Motor neuron (in vitro differentiated cells): ENCODE measurements at regions of chr19 and their contacts with region 1.

Region 1: GRCh38 chr19:19643158-19644053 is at the start of gene GMIP:
- ATAC-seq: peak; percentile 78 to 87 (median 86)
- H3K4me3 ChIP-seq: peak within 1 kb of the TSS; percentile 47 to 86 (median 73)
- H3K27ac ChIP-seq: peak within 1 kb of the TSS; percentile 21 to 35
- H3K4me1 ChIP-seq: peaks cover 4 to 5% of the 10 kb centered on the region in 2 donors
- total RNA-seq, gene GMIP: 3.2 to 18.2 (median 7.5) TPM

Region 2: GRCh38 chr19:19420570-19421298 is 222.7 kb before region 1 on chr19:
- in situ Hi-C with region 1: no loop called
- ATAC-seq: no peak
- H3K4me3 ChIP-seq: no peak overlapping the region
- H3K27ac ChIP-seq: no peak overlapping the region
- H3K4me1 ChIP-seq: peaks cover 0 to 12% of the 10 kb centered on the region in 2 donors

Region 3: GRCh38 chr19:19531951-19532805 is 111.2 kb before region 1 on chr19:
- in situ Hi-C with region 1: loop called (anchors 10 to 25 kb)
- ATAC-seq: peak; percentile 69 to 85 (median 75)
- H3K4me3 ChIP-seq: no peak overlapping the region
- H3K27ac ChIP-seq: no peak overlapping the region
- H3K4me1 ChIP-seq: peaks cover 7 to 19% of the 10 kb centered on the region in 2 donors

Region 4: DNA sequence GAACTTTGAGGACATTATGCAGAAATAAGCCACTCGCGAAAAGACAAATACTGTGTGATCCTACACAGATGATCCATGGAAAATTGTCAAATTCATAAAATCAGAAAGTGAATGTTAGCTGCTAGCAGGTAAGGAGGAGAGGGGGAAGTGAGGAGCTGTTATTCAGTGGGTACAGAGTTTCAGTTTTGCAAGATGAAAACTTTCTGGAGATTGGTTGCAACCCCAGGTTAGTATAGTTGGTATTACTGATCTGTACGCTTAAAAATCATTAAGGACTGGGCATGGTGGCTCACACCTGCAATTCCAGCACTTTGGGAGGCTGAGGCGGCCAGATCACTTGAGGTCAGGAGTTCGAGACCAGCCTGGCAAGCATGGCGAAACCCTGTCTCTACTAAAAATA is 43.2 kb after region 1 on chr19:
- in situ Hi-C with region 1: no loop called
- ATAC-seq: no peak
- H3K4me3 ChIP-seq: no peak overlapping the region
- H3K27ac ChIP-seq: no peak overlapping the region
- H3K4me1 ChIP-seq: no peaks in the 10 kb centered on the region

Region 5: GRCh38 chr19:20107301-20107700 is 463.9 kb after region 1 on chr19:
- in situ Hi-C with region 1: no loop called
- ATAC-seq: no peak
- H3K4me3 ChIP-seq: no peak overlapping the region
- H3K27ac ChIP-seq: no peak overlapping the region
- H3K4me1 ChIP-seq: no peaks in the 10 kb centered on the region